HAP-1 (cell line): ENCODE measurements at regions of chr18 and their contacts with region 1.

Region 1: DNA sequence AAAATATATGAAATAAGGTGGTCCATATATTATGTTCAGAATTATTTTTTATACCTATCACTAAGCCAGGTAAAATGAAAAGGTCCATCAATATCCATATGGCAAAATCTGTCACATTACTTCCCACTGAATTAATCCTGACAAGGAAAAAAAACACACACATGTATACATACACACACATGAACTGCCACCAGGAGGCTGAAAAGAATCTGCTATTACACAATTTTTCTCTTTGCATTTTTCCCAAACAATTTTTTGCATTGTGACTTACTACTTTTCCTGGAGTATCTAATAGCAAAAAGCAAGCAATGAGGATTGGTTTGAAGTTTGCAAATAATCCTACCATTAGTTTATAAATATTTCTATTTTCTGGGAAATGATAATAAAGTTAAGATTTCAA is 128.2 kb upstream of the CD226 start:
- DNase-seq: no peak
- H3K4me3 ChIP-seq: no peak overlapping the region
- H3K4me1 ChIP-seq: no peaks in the 10 kb centered on the region
- H3K27me3 ChIP-seq: no peaks in the 10 kb centered on the region

Region 2: DNA sequence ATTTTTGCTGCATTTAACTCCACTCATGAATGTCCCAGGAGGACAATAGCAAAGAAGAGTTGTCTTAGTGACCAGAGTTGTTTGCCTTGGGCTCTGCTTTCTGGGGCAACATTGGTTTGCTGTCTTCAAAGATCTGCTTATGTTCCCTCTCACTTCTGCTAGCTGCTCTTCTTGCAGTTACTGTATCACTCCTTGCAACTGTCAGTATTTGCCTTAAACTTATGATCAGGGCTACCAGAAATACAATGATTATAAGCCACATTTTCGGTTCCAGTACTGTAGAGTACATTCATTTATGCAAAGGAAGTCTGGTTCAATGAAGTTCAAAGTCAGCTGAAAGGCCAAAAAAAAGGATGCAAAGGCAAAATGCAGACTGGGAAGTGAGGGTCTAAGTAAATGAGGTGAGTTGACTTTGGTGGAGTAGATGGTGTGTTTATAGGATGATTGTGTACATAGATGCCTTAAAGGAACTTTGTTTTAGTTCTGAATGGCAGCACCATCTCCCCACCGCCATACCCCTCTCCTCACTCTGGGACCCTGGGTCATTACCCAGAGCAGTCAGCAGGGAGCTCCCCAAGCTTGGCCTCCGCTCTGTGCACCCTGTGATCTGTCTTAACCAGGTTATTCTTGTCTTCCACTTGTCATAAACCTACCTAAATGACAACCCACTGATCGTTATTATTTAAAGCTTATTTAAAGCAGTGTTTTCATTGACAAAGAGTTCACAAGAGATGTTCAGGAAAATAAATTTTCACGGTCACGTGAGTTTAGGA is 439.2 kb before region 1 on chr18:
- in situ Hi-C with region 1: loop called (anchors 25 kb)
- DNase-seq: peak; percentile 34 to 65
- H3K4me3 ChIP-seq: no peak overlapping the region
- H3K4me1 ChIP-seq: peaks cover 6% of the 10 kb centered on the region
- H3K27me3 ChIP-seq: no peaks in the 10 kb centered on the region

Region 3: DNA sequence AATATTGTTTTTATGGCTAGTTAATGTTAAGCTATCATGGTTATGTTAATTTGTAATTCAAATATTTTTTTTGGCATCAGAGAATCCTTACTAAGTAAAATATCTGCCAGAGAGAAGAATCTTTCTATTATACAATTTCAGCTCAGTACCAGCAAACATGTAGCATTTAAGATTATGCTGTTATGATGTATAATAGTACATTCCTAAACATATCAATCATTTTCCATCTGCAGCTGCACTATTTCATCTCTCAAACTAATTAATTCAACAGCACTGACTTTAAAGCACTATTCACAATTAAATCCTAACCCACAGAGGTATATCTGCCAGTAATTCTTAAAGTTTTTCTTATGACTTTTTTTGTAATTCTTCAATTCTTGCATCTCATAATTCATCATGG is 378.8 kb before region 1 on chr18:
- in situ Hi-C with region 1: no loop called
- DNase-seq: no peak
- H3K4me3 ChIP-seq: no peak overlapping the region
- H3K4me1 ChIP-seq: no peaks in the 10 kb centered on the region
- H3K27me3 ChIP-seq: no peaks in the 10 kb centered on the region